Body of pancreas (tissue), 4 donors: ENCODE measurements at regions of chr9 and their contacts with region 1.

Region 1: GRCh38 chr9:136331556-136332481 is 4.5 kb downstream of the GPSM1 start:
- DNase-seq: no peak
- ATAC-seq: no peak
- H3K4me3 ChIP-seq: no peak overlapping the region
- H3K27ac ChIP-seq: no peak overlapping the region
- H3K4me1 ChIP-seq: peaks cover 13% of the 10 kb centered on the region
- H3K27me3 ChIP-seq: no peaks in the 10 kb centered on the region
- CTCF ChIP-seq: no peak
- POLR2A ChIP-seq: no peak

Region 2: GRCh38 chr9:136264031-136264430 is 67.8 kb before region 1 on chr9:
- intact Hi-C with region 1: no loop called
- DNase-seq: no peak
- ATAC-seq: no peak
- H3K4me3 ChIP-seq: no peak overlapping the region
- H3K27ac ChIP-seq: no peak overlapping the region
- H3K4me1 ChIP-seq: peaks cover 13% of the 10 kb centered on the region
- H3K27me3 ChIP-seq: no peaks in the 10 kb centered on the region
- CTCF ChIP-seq: no peak
- POLR2A ChIP-seq: no peak

Region 3: GRCh38 chr9:136364942-136365774 is 33.3 kb after region 1 on chr9:
- intact Hi-C with region 1: loop called (anchors 5 kb)
- DNase-seq: no peak
- ATAC-seq: no peak
- H3K4me3 ChIP-seq: no peak overlapping the region
- H3K27ac ChIP-seq: no peak overlapping the region
- H3K4me1 ChIP-seq: peaks cover 22% of the 10 kb centered on the region
- H3K27me3 ChIP-seq: no peaks in the 10 kb centered on the region
- CTCF ChIP-seq: no peak
- POLR2A ChIP-seq: no peak